Right cardiac atrium (tissue), 5 donors: ENCODE measurements at regions of chr14 and their contacts with region 1.

Region 1: GRCh38 chr14:75418849-75419768 is 8.7 kb upstream of the JDP2 start:
- DNase-seq: peak in 1 of 3 donors; percentile 61
- ATAC-seq: peak; percentile 55 to 57
- H3K4me3 ChIP-seq: no peak overlapping the region
- H3K27ac ChIP-seq: peak overlapping the region; percentile 23
- H3K4me1 ChIP-seq: peaks cover 3% of the 10 kb centered on the region
- H3K27me3 ChIP-seq: no peaks in the 10 kb centered on the region

Region 2: GRCh38 chr14:75109877-75110276 is 309.2 kb before region 1 on chr14:
- intact Hi-C with region 1: no loop called
- DNase-seq: no peak
- ATAC-seq: no peak
- H3K4me3 ChIP-seq: no peak overlapping the region
- H3K27ac ChIP-seq: no peak overlapping the region
- H3K4me1 ChIP-seq: no peaks in the 10 kb centered on the region
- H3K27me3 ChIP-seq: no peaks in the 10 kb centered on the region

Region 3: GRCh38 chr14:75469606-75470237 is 50.6 kb after region 1 on chr14:
- intact Hi-C with region 1: loop called in 1 of 4 experiments (anchors 10 kb)
- DNase-seq: peak in 2 of 3 donors; percentile 33 to 64
- ATAC-seq: peak in 1 of 2 donors; percentile 19
- H3K4me3 ChIP-seq: no peak overlapping the region
- H3K27ac ChIP-seq: no peak overlapping the region
- H3K4me1 ChIP-seq: peaks cover 2% of the 10 kb centered on the region
- H3K27me3 ChIP-seq: no peaks in the 10 kb centered on the region